CD14-positive monocyte (primary cell): ENCODE measurements at regions of chr7 and their contacts with region 1.

Region 1: GRCh38 chr7:66844552-66845378 is 76.3 kb upstream of the TMEM248 start:
- DNase-seq: peak; percentile 99 to 100 (median 99)
- H3K4me3 ChIP-seq: peak overlapping the region; percentile 60 to 92 (median 92)
- H3K4me3 Mint-ChIP-seq: peak overlapping the region; percentile 85 to 93
- H3K27ac ChIP-seq: peak overlapping the region; percentile 90 to 99
- H3K27ac Mint-ChIP-seq: peak overlapping the region; percentile 99 to 100 (median 99)
- H3K4me1 ChIP-seq: peaks cover 32 to 53% of the 10 kb centered on the region in 2 donors
- H3K4me1 Mint-ChIP-seq: peaks cover 38% of the 10 kb centered on the region
- H3K27me3 ChIP-seq: no peaks in the 10 kb centered on the region
- H3K27me3 Mint-ChIP-seq: peaks cover 0 to 2% (median 2%) of the 10 kb centered on the region in 3 donors
- CTCF ChIP-seq: peak; percentile 28

Region 2: DNA sequence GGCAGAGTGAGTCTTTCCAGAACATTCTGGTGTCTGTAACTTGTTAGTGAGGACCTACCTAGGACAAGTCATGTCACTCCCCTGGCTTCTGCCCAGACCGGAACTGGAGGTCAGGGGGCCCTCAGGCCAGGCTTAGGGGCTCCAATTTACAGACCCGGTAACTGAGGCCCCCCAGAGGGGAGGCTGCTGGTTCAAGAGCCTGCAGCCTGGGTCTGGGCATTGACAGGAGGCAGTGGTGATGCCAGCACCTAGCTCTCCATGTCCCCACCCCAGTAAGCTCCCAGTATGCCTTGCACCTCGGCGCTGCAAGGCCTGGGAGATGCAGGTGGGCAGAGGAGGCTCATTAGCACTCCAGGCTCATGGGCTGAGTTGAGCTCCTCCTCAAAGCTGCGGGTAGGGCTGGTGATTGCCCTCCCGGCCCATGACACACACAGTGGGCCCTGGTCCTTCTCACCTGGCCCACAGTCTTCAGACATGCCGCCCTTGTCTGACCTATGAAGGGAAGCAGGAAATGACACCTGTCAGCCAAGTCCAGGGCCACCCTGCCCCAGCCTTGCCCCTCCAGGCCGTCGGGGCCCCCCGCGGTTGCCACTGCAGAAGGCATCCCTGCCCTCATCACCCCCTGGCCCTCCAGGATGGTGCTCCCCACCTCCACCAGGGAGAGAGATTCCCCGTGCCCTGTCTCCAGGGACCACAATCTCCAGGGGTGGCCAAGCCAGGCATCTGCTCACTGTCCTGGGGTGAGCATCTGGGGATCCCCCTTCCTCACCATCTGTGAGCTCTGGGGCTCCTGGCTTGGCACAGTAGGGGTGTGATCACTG is 12.0 kb before region 1 on chr7:
- intact Hi-C with region 1: no loop called
- DNase-seq: no peak
- H3K4me3 ChIP-seq: no peak overlapping the region
- H3K4me3 Mint-ChIP-seq: no peak overlapping the region
- H3K27ac ChIP-seq: no peak overlapping the region
- H3K27ac Mint-ChIP-seq: no peak overlapping the region
- H3K4me1 ChIP-seq: no peaks in the 10 kb centered on the region
- H3K4me1 Mint-ChIP-seq: no peaks in the 10 kb centered on the region
- H3K27me3 ChIP-seq: no peaks in the 10 kb centered on the region
- H3K27me3 Mint-ChIP-seq: peaks cover 3 to 6% (median 5%) of the 10 kb centered on the region in 3 donors
- CTCF ChIP-seq: no peak

Region 3: DNA sequence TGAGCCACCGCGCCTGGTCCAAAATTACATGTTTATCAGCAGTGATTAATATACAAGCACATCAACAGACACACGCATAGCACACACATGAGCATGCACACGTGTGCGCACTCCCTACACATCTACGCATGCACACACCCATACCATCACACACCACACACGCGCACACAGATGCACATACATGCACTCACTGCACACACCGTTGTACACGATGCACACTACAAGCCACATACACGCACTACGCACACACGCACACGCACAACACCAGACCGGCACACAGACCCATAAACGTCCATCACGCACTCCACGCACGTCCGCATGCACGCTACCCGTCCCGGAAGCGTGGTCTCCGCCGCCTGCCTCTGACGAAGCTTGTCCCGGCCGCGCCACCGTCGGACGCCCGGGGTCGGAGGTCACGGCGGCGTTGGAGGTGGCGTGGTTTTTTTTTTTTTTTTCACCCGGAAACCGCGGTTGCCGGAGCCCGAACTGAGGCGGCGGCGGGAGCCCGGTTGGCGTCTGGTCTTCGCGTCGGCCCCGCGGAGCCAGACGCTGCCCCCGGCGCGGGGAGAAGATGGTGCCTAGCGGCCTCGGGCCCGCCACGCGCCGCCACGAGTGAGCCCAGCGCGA is 76.1 kb after region 1 on chr7 and contains the start of gene TMEM248:
- intact Hi-C with region 1: loop called (anchors 2 to 5 kb)
- DNase-seq: peak; percentile 86 to 90 (median 88)
- H3K4me3 ChIP-seq: peak within 1 kb of the TSS; percentile 70 to 94 (median 93)
- H3K4me3 Mint-ChIP-seq: peak within 1 kb of the TSS; percentile 95 to 100
- H3K27ac ChIP-seq: peak within 1 kb of the TSS; percentile 61 to 94
- H3K27ac Mint-ChIP-seq: peak within 1 kb of the TSS; percentile 92 to 97 (median 94)
- H3K4me1 ChIP-seq: peaks cover 16 to 21% of the 10 kb centered on the region in 2 donors
- H3K4me1 Mint-ChIP-seq: peaks cover 26% of the 10 kb centered on the region
- H3K27me3 ChIP-seq: no peaks in the 10 kb centered on the region
- H3K27me3 Mint-ChIP-seq: peaks cover 0 to 1% (median 0%) of the 10 kb centered on the region in 3 donors
- CTCF ChIP-seq: no peak
- polyA plus RNA-seq, gene TMEM248: 67.5 to 82.3 (median 78.3) TPM